ENCODE measurements at regions of chr17 and their contacts with region 1.

Region 1: GRCh38 chr17:82698065-82698973 is at the start of gene RAB40B:
- DNase-seq: peak; percentile 98
- H3K4me3 Mint-ChIP-seq: peak within 1 kb of the TSS; percentile 75
- H3K27ac Mint-ChIP-seq: no peak within 1 kb of the TSS
- H3K4me1 Mint-ChIP-seq: peaks cover 12% of the 10 kb centered on the region
- H3K27me3 Mint-ChIP-seq: peaks cover 21% of the 10 kb centered on the region
- total RNA-seq, gene RAB40B: 1.4 to 2.0 TPM

Region 2: GRCh38 chr17:82603981-82604448 is 94.3 kb before region 1 on chr17:
- CTCF ChIA-PET with region 1: no interaction called
- POLR2A ChIA-PET with region 1: no interaction called
- DNase-seq: peak; percentile 46
- H3K4me3 Mint-ChIP-seq: no peak overlapping the region
- H3K27ac Mint-ChIP-seq: peak overlapping the region; percentile 64
- H3K4me1 Mint-ChIP-seq: peaks cover 19% of the 10 kb centered on the region
- H3K27me3 Mint-ChIP-seq: no peaks in the 10 kb centered on the region

Region 3: GRCh38 chr17:82716203-82717010 is 18.1 kb after region 1 on chr17 and contains the start of gene FN3KRP:
- CTCF ChIA-PET with region 1: no interaction called
- POLR2A ChIA-PET with region 1: interaction called, 11 read pairs
- DNase-seq: peak; percentile 90
- H3K4me3 Mint-ChIP-seq: peak within 1 kb of the TSS; percentile 98
- H3K27ac Mint-ChIP-seq: peak within 1 kb of the TSS; percentile 86
- H3K4me1 Mint-ChIP-seq: peaks cover 26% of the 10 kb centered on the region
- H3K27me3 Mint-ChIP-seq: peaks cover 2% of the 10 kb centered on the region
- total RNA-seq, gene FN3KRP: 30.4 to 32.1 TPM